Mammary epithelial cell (primary cell): ENCODE measurements at regions of chr1 and their contacts with region 1.

Region 1: DNA sequence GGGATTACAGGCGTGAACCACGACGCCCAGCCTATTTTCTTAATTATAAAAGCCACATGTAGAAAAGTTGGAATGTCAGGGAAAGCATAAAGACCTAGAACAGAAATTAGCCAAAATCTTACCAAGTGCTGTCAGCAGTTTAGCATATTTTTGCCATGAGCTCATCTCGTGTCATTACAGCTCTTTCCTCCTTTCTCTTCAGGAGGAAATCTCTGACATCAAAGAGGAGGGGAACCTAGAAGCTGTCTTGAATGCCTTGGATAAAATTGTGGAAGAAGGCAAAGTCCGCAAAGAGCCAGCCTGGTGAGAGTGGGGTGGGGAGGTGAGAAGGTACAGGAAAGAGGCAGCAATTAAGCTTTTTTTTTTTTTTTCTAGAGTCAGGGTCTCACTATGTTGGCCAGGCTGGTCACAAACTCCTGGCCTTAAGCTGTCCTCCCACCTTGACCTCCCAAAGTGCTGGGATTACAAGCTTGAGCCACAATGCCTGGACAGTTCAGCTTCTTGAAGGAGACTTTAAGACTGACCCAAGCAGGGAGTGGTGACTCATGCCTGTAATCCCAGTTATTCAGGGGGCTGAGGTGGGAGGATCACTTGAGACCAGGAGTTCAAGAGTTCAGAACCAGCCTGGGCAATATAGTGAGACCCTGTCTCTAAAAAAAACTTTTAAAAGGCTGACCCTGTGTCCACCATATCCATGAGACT is 8.4 kb upstream of the BGLAP start:
- DNase-seq: no peak
- H3K4me3 ChIP-seq: no peak overlapping the region
- H3K27ac ChIP-seq: no peak overlapping the region
- H3K4me1 ChIP-seq: peaks cover 8% of the 10 kb centered on the region
- H3K27me3 ChIP-seq: no peaks in the 10 kb centered on the region
- CTCF ChIP-seq: no peak

Region 2: GRCh38 chr1:156146020-156146768 is 87.4 kb before region 1 on chr1:
- CTCF ChIA-PET with region 1: interaction called, 10 read pairs
- dilution Hi-C with region 1: no loop called
- in situ Hi-C with region 1: loop called in 1 of 2 experiments (anchors 10 kb)
- intact Hi-C with region 1: no loop called
- DNase-seq: peak; percentile 93
- H3K4me3 ChIP-seq: no peak overlapping the region
- H3K27ac ChIP-seq: no peak overlapping the region
- H3K4me1 ChIP-seq: peaks cover 10% of the 10 kb centered on the region
- H3K27me3 ChIP-seq: no peaks in the 10 kb centered on the region
- CTCF ChIP-seq: peak; percentile 67 to 74

Region 3: DNA sequence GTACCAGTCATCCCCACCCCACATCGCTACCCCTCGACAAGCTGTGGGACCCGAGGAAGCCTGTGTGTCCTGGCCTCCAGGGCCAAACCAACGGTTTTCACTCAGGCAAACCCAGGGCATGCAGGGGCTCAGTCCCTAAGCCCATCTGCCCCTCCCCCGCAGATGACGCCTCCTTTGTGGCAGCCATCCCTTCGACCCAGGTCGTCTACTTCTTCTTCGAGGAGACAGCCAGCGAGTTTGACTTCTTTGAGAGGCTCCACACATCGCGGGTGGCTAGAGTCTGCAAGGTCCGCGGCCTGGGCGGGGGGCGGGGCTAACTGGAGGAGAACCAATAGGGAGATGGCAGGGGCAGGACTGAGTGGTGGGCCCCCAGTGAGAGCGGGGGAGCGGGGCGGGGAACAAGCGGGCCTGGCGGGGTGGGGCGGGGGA is 72.8 kb before region 1 on chr1:
- CTCF ChIA-PET with region 1: no interaction called
- dilution Hi-C with region 1: loop called (anchors 5 kb)
- in situ Hi-C with region 1: loop called in 1 of 2 experiments (anchors 10 kb)
- intact Hi-C with region 1: no loop called
- DNase-seq: no peak
- H3K4me3 ChIP-seq: no peak overlapping the region
- H3K27ac ChIP-seq: no peak overlapping the region
- H3K4me1 ChIP-seq: no peaks in the 10 kb centered on the region
- H3K27me3 ChIP-seq: no peaks in the 10 kb centered on the region
- CTCF ChIP-seq: no peak

Region 4: DNA sequence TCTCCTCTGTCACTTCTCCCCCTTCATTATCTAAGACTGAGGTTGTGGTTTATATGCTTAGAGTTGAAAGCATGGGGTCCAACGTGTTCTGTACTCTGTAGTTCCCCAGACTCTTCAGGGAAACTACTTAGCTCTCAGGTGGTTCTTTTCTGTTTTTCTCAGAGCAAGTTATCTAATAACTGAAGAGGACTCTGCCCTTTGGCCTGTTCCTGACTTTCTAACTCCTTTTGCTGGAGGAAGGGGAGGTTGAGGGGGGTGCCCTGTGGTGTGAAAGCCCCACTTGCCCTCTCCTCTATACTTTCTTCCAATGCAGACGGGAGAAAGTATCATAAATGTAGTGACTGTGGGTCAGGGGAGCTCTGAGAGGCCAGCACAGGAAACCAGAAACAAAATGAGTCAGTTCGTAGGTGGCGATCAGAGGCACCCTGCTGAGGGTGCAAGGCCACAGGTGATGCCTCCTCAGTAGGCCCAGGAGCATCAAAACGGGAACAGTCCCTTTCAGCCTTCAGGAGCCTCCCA is 34.7 kb before region 1 on chr1:
- CTCF ChIA-PET with region 1: no interaction called
- dilution Hi-C with region 1: loop called (anchors 5 kb)
- in situ Hi-C with region 1: no loop called
- intact Hi-C with region 1: no loop called
- DNase-seq: no peak
- H3K4me3 ChIP-seq: no peak overlapping the region
- H3K27ac ChIP-seq: no peak overlapping the region
- H3K4me1 ChIP-seq: peaks cover 5% of the 10 kb centered on the region
- H3K27me3 ChIP-seq: no peaks in the 10 kb centered on the region
- CTCF ChIP-seq: no peak